ENCODE measurements at regions of chr6 and their contacts with region 1.

Region 1: GRCh38 chr6:2988426-2989331 is 11.0 kb upstream of the NQO2 start:
- DNase-seq: peak; percentile 86 to 92 (median 89)
- H3K4me3 ChIP-seq: peak overlapping the region; percentile 65 to 98 (median 80)
- H3K27ac ChIP-seq: peak overlapping the region; percentile 98 to 99
- H3K4me1 ChIP-seq: peaks cover 12 to 49% (median 37%) of the 10 kb centered on the region in 4 experiments
- H3K27me3 ChIP-seq: no peaks in the 10 kb centered on the region

Region 2: DNA sequence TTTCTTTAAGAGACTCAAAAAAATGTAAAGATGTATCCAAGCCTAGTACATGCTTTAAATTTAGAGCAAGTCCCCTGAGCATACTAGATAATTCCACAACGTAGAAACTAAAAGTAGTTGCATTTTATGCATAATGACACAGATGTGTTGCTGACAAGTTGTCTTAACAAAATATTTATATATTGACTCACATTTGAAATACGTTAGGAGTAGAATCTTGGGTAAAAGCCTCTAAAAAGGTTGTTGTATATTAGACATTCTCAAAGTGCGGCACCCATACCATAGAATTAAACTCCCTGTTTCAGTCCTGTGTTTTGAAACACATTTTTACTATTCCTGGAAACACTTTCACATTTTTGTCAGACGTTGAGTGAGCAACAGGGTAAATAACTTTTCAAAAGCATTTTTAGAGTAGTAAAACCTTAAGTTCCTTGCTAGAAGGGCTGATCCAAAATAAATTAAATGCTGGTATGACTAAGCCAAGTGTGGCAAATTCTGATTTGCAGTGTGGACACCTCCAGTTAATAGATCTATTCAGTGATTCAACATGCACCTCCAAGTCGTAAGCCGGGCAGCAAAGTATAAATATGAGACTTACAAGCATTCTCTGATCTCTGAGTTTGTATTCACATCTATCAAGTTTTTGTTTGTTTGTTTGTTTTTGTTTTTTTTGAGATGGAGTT is 840.8 kb before region 1 on chr6:
- CTCF ChIA-PET with region 1: no interaction called
- POLR2A ChIA-PET with region 1: no interaction called
- DNase-seq: no peak
- H3K4me3 ChIP-seq: no peak overlapping the region
- H3K27ac ChIP-seq: no peak overlapping the region
- H3K4me1 ChIP-seq: peaks cover 0 to 12% (median 2%) of the 10 kb centered on the region in 4 experiments
- H3K27me3 ChIP-seq: no peaks in the 10 kb centered on the region

Region 3: DNA sequence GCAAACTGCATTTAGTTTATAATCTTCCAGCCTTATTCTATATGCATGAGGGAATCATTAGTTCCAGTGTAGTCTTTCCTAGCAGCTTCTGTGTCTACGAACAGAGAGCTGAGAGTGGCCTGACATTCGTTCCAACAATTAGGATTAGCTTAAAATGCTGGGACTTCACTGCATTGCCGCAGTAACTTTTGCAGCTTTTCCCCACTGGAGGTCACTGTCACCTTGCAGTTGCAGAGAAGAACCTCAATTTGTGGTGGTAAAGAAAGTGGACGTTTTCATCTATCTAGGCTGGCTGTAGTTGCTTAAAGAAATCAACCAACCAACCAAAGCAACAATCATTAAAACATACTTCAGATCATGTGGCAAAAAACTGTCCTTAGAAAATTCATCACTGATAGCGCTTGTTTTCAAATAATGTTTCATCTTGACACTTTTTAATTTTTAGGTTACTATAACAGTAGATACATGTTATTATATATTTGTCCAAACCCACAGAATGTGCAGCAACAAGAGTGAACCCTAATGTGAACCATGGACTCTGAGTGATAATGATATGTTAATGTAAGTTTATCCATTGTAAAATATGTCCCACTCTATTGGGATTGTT is 250.2 kb before region 1 on chr6:
- CTCF ChIA-PET with region 1: interaction called, 12 read pairs
- POLR2A ChIA-PET with region 1: no interaction called
- DNase-seq: peak; percentile 84 to 91 (median 88)
- H3K4me3 ChIP-seq: no peak overlapping the region
- H3K27ac ChIP-seq: no peak overlapping the region
- H3K4me1 ChIP-seq: peaks cover 9 to 38% (median 25%) of the 10 kb centered on the region in 4 experiments
- H3K27me3 ChIP-seq: no peaks in the 10 kb centered on the region

Region 4: DNA sequence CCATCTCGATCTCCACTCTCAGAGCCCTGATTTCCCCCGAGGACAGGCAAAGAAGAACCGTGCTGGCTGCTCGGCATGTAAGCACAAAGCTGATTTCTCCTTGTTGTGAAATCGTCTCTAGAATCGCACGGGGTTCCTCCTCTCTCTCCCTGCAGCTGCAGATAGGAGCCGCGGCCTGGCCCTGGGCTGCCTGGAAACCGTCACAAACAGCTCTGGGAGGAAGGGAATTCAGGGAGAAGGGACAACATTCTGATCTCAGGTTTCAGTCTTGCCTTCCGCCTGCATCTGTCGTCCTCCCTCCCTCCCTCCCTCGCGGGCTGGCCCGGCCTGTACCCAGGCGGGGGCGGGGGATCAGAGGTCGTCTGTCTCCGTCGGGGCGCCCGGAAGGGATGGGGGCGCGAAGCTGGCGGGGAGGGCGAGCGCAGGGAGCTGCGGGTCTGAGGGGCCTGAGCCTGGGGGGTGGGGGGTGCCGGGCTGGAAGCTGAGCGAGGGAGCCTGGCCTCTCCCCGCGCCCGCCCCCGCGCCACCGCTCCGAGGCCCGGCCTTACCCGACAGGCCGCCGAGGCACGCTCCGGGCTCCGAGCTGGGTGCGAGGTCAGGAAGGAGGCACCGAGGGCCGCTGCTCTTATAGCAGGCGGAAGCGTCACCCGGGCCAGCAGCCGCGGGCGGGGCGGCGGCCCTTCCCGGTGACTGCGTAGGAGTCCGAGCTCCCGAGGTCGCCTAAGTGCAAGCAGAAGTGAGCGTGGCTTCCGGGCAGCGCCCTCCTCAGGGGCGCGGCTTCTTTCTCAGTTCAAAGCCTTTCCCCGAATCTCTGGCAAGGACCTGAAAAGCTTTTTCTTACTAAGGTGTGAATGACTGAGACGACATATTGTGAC is 147.2 kb before region 1 on chr6 and contains the start of gene SERPINB1:
- CTCF ChIA-PET with region 1: interaction called, 71 read pairs
- POLR2A ChIA-PET with region 1: interaction called, 6 read pairs
- DNase-seq: peak; percentile 86 to 94 (median 91)
- H3K4me3 ChIP-seq: peak within 1 kb of the TSS; percentile 59 to 97 (median 93)
- H3K27ac ChIP-seq: peak within 1 kb of the TSS; percentile 75 to 91
- H3K4me1 ChIP-seq: peaks cover 39 to 61% (median 56%) of the 10 kb centered on the region in 4 experiments
- H3K27me3 ChIP-seq: no peaks in the 10 kb centered on the region

Region 5: GRCh38 chr6:2853761-2854395 is 134.8 kb before region 1 on chr6:
- CTCF ChIA-PET with region 1: interaction called, 71 read pairs
- POLR2A ChIA-PET with region 1: no interaction called
- DNase-seq: peak; percentile 48 to 77 (median 73)
- H3K4me3 ChIP-seq: peak overlapping the region in 6 of 7 experiments; percentile 16 to 72 (median 42)
- H3K27ac ChIP-seq: peak overlapping the region; percentile 52 to 88
- H3K4me1 ChIP-seq: peaks cover 30 to 58% (median 52%) of the 10 kb centered on the region in 4 experiments
- H3K27me3 ChIP-seq: no peaks in the 10 kb centered on the region

Region 6: GRCh38 chr6:2952557-2953095 is 36.1 kb before region 1 on chr6:
- CTCF ChIA-PET with region 1: interaction called, 56 read pairs
- POLR2A ChIA-PET with region 1: interaction called, 12 read pairs
- DNase-seq: peak; percentile 81 to 82 (median 82)
- H3K4me3 ChIP-seq: no peak overlapping the region
- H3K27ac ChIP-seq: no peak overlapping the region
- H3K4me1 ChIP-seq: peaks cover 0 to 20% (median 10%) of the 10 kb centered on the region in 4 experiments
- H3K27me3 ChIP-seq: no peaks in the 10 kb centered on the region

Region 7: GRCh38 chr6:2966347-2966746 is 22.3 kb before region 1 on chr6:
- CTCF ChIA-PET with region 1: interaction called, 15 read pairs
- POLR2A ChIA-PET with region 1: interaction called, 4 read pairs
- DNase-seq: no peak
- H3K4me3 ChIP-seq: no peak overlapping the region
- H3K27ac ChIP-seq: peak overlapping the region in 1 of 2 experiments; percentile 35
- H3K4me1 ChIP-seq: peaks cover 3 to 57% (median 27%) of the 10 kb centered on the region in 4 experiments
- H3K27me3 ChIP-seq: no peaks in the 10 kb centered on the region

Region 8: DNA sequence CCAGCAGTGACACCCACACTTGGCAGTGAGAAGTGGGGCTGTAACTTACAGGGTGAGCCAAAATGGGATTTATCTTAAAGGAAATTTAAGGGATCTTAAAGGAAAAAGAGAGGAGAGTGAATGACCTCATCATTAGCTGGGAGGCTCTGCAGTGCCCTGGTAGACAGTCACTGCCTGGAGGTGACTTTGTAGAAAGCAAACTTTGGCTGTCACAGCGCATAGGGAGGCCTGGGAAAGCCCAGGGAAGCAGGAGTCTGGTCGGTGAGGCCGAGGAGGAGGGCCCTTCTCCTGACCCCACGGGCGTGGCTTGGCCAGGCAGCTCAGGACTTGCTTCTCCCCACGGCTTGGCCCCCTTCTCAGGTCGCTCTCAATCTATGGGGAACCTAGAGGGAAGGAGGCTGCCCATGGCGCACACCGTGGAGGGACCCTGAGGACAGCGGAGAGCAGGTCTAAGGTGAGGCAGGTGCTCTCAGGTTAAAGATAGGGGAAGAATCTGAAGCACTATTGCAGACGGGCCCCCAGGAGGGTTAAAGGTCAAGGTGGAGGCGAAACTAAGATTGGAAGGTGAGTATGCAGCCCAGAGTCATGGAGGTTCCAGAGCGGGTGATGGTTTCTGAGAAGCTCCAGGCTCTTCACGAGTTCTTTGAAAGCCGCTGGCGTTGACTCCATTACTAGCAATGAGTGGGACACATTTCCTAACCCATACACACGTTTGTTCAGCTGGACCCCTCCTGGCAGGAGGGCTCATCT is 64.0 kb after region 1 on chr6:
- CTCF ChIA-PET with region 1: interaction called, 11 read pairs
- POLR2A ChIA-PET with region 1: interaction called, 4 read pairs
- DNase-seq: no peak
- H3K4me3 ChIP-seq: peak overlapping the region in 2 of 7 experiments; percentile 50 to 72
- H3K27ac ChIP-seq: peak overlapping the region in 1 of 2 experiments; percentile 71
- H3K4me1 ChIP-seq: peaks cover 0 to 22% (median 16%) of the 10 kb centered on the region in 4 experiments
- H3K27me3 ChIP-seq: no peaks in the 10 kb centered on the region

Measured in common myeloid progenitor, CD34-positive (primary cell).